Lower lobe of right lung (tissue), 2 donors: ENCODE measurements at regions of chr1 and their contacts with region 1.

Region 1: GRCh38 chr1:197868751-197869489 is 33.5 kb upstream of the C1orf53 start:
- DNase-seq: no peak
- ATAC-seq: peak; percentile 77 to 90
- H3K4me3 ChIP-seq: no peak overlapping the region
- H3K27ac ChIP-seq: no peak overlapping the region
- H3K4me1 ChIP-seq: no peaks in the 10 kb centered on the region
- H3K27me3 ChIP-seq: no peaks in the 10 kb centered on the region
- CTCF ChIP-seq: peak; percentile 66

Region 2: DNA sequence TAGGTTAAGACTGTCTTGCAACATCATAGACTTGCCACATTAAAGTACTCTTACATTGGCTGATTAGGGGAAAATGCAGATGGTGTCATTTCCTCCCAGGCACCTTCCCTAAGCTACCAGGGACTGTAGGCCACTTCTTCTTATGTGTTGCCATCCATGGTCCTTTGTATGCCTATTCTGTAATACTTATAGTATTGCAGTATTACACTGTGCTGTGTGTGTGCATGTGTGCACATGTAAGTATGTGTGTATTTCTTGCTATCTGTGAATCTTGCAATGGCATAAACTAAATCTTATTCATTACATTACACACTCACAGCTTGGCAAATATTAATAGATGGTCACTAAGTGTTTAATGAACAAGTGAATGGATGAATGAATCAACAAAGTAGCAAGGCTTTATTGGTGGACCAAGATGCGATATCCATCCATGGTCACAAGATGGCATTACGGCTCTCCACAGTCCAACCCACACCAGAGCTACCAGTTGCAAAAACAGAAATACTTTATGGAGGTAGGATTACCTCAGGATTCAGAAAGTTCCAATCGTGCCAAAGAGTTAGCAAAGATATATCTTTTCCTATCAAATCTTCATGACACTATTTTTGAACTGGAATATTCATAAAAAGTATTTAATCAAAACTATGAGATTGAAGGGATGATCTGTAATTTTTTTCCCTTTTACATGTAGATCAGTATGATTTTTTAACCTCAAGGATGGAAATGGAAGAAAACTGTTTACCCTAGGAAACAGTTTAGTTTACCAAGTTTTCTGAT is 253.8 kb before region 1 on chr1:
- intact Hi-C with region 1: loop called (anchors 10 kb)
- DNase-seq: no peak
- ATAC-seq: peak; percentile 55 to 81
- H3K4me3 ChIP-seq: no peak overlapping the region
- H3K27ac ChIP-seq: no peak overlapping the region
- H3K4me1 ChIP-seq: no peaks in the 10 kb centered on the region
- H3K27me3 ChIP-seq: no peaks in the 10 kb centered on the region
- CTCF ChIP-seq: peak; percentile 55

Region 3: GRCh38 chr1:198408716-198409115 is 539.8 kb after region 1 on chr1:
- intact Hi-C with region 1: no loop called
- DNase-seq: no peak
- ATAC-seq: no peak
- H3K4me3 ChIP-seq: no peak overlapping the region
- H3K27ac ChIP-seq: no peak overlapping the region
- H3K4me1 ChIP-seq: no peaks in the 10 kb centered on the region
- H3K27me3 ChIP-seq: no peaks in the 10 kb centered on the region
- CTCF ChIP-seq: no peak